Activated naive CD4-positive, alpha-beta T cell treated with anti-CD3 and anti-CD28 coated beads, Interleukin-2, amount 10 ng/mL, durations not matched to agents 7 days and 5 days (primary cell): ENCODE measurements at regions of chr22 and their contacts with region 1.

Region 1: GRCh38 chr22:22591348-22592299 is 32.6 kb upstream of the PRAME start:
- DNase-seq: no peak
- H3K4me3 Mint-ChIP-seq: no peak overlapping the region
- H3K27ac Mint-ChIP-seq: no peak overlapping the region
- H3K4me1 Mint-ChIP-seq: no peaks in the 10 kb centered on the region
- H3K27me3 Mint-ChIP-seq: peaks cover 46% of the 10 kb centered on the region

Region 2: GRCh38 chr22:22463855-22464540 is 127.6 kb before region 1 on chr22:
- CTCF ChIA-PET with region 1: interaction called, 15 read pairs
- DNase-seq: peak; percentile 71
- H3K4me3 Mint-ChIP-seq: no peak overlapping the region
- H3K27ac Mint-ChIP-seq: no peak overlapping the region
- H3K4me1 Mint-ChIP-seq: no peaks in the 10 kb centered on the region
- H3K27me3 Mint-ChIP-seq: peaks cover 30% of the 10 kb centered on the region

Region 3: GRCh38 chr22:22576244-22576988 is 15.2 kb before region 1 on chr22:
- CTCF ChIA-PET with region 1: interaction called, 44 read pairs
- DNase-seq: peak; percentile 51
- H3K4me3 Mint-ChIP-seq: no peak overlapping the region
- H3K27ac Mint-ChIP-seq: no peak overlapping the region
- H3K4me1 Mint-ChIP-seq: no peaks in the 10 kb centered on the region
- H3K27me3 Mint-ChIP-seq: peaks cover 41% of the 10 kb centered on the region

Region 4: GRCh38 chr22:22702237-22703202 is 110.9 kb after region 1 on chr22:
- CTCF ChIA-PET with region 1: interaction called, 14 read pairs
- DNase-seq: peak; percentile 20
- H3K4me3 Mint-ChIP-seq: no peak overlapping the region
- H3K27ac Mint-ChIP-seq: no peak overlapping the region
- H3K4me1 Mint-ChIP-seq: no peaks in the 10 kb centered on the region
- H3K27me3 Mint-ChIP-seq: peaks cover 21% of the 10 kb centered on the region